ENCODE measurements at regions of chr9 and their contacts with region 1.

Region 1: DNA sequence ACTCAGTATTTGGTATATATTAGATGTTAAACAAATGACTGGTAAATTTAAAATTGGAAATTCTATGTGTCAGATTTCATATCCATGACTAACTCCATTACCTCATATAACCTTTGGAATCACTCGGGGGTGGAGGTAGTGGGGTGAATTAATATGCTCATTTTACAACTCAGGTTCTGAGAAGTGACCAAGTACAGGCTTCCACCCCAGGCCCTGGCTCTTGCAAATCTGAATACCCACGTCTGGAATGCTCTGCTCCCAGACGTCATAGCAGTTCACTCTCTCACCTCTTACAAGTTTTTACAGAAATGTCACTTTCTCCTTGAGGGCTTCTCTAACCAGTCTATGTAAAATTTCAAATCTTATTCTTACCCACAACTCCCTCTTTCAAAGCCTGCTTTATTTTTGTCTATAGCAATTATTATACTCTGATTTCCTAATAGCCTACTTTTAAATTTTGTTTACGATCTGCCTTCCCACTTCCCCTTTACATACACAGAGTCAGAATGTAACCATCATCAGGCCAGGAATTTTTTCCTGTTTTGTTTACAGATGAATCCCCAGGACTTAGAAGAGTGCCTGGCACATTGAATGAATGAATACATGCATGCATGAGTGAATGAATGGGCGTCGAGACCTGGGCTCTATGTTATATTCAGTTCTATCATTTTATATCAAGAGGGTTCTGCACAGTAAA is 134.1 kb upstream of the IFNE start:
- DNase-seq: no peak
- ATAC-seq: no peak
- H3K4me3 ChIP-seq: no peak overlapping the region
- H3K27ac ChIP-seq: no peak overlapping the region
- H3K4me1 ChIP-seq: no peaks in the 10 kb centered on the region
- H3K27me3 ChIP-seq: no peaks in the 10 kb centered on the region
- CTCF ChIP-seq: no peak
- POLR2A ChIP-seq: no peak

Region 2: DNA sequence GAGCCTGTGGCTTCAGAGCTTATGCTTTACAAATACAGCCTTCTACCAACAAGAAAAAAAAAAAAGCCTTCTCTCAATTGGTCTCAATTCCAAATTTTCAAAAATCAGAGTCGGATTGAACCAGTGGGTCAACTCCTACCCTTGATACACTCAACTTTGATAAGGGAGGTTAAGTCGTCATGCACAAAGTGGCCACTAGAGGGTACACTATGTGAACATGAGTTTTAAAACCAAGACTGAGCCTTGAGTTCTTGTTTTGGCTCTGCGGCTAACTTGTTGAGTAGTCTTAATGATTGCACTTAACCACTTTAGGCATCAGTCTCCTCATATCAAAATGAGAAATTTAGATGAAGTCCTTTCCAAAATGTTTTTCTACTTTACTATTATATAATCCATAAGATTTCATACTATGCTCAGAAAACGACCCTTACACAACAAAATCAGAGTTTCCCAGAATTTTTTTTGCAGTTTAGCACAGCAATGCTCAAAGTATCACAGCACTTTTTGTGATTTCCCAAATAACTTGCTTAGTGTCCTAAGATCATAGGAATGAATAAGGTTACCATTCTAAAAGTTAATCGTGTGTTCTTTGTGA is 93.3 kb after region 1 on chr9:
- in situ Hi-C with region 1: loop called in 1 of 4 experiments (anchors 25 kb)
- intact Hi-C with region 1: no loop called
- DNase-seq: no peak
- ATAC-seq: no peak
- H3K4me3 ChIP-seq: no peak overlapping the region
- H3K27ac ChIP-seq: no peak overlapping the region
- H3K4me1 ChIP-seq: no peaks in the 10 kb centered on the region
- H3K27me3 ChIP-seq: no peaks in the 10 kb centered on the region
- CTCF ChIP-seq: peak; percentile 30 to 74 (median 45)
- POLR2A ChIP-seq: no peak